ENCODE measurements at regions of chr1 and their contacts with region 1.

Region 1: GRCh38 chr1:28248283-28249012 is 10.9 kb upstream of the SESN2 start:
- DNase-seq: peak; percentile 80
- ATAC-seq: peak; percentile 53
- H3K4me3 ChIP-seq: peak overlapping the region; percentile 16; the same call in 1 of the 2 replicates
- H3K27ac ChIP-seq: peak overlapping the region; percentile 68; the same call in 1 of the 2 replicates
- H3K4me1 ChIP-seq: peaks cover 14% of the 10 kb centered on the region
- H3K27me3 ChIP-seq: no peaks in the 10 kb centered on the region; the same call in 1 of the 2 replicates
- CTCF ChIP-seq: peak; percentile 90
- POLR2A ChIP-seq: no peak
- RAD21 ChIP-seq: peak; percentile 88

Region 2: GRCh38 chr1:28259307-28260167 is 11.1 kb after region 1 on chr1 and contains the start of gene SESN2:
- CTCF ChIA-PET with region 1: interaction called, 15 read pairs
- POLR2A ChIA-PET with region 1: interaction called, 10 read pairs
- dilution Hi-C with region 1: no loop called
- in situ Hi-C with region 1: no loop called
- intact Hi-C with region 1: no loop called
- DNase-seq: peak; percentile 99
- ATAC-seq: peak; percentile 88
- H3K4me3 ChIP-seq: peak within 1 kb of the TSS; percentile 99
- H3K27ac ChIP-seq: peak within 1 kb of the TSS; percentile 92
- H3K4me1 ChIP-seq: peaks cover 15% of the 10 kb centered on the region
- H3K27me3 ChIP-seq: no peaks in the 10 kb centered on the region
- CTCF ChIP-seq: 0 out of 2 replicates have a peak, but pooled peaks have one; percentile 0
- POLR2A ChIP-seq: peak; percentile 100
- RAD21 ChIP-seq: no peak; the same call in 1 of the 2 replicates
- total RNA-seq, gene SESN2: 8.1 and 10.2 TPM in 2 replicates

Region 3: GRCh38 chr1:28290851-28291250 is 42.4 kb after region 1 on chr1:
- CTCF ChIA-PET with region 1: no interaction called
- POLR2A ChIA-PET with region 1: no interaction called
- dilution Hi-C with region 1: no loop called
- in situ Hi-C with region 1: no loop called
- intact Hi-C with region 1: no loop called
- DNase-seq: no peak
- ATAC-seq: no peak
- H3K4me3 ChIP-seq: no peak overlapping the region
- H3K27ac ChIP-seq: no peak overlapping the region
- H3K4me1 ChIP-seq: no peaks in the 10 kb centered on the region
- H3K27me3 ChIP-seq: no peaks in the 10 kb centered on the region; the same call in 1 of the 2 replicates
- CTCF ChIP-seq: no peak
- POLR2A ChIP-seq: no peak
- RAD21 ChIP-seq: no peak

Region 4: DNA sequence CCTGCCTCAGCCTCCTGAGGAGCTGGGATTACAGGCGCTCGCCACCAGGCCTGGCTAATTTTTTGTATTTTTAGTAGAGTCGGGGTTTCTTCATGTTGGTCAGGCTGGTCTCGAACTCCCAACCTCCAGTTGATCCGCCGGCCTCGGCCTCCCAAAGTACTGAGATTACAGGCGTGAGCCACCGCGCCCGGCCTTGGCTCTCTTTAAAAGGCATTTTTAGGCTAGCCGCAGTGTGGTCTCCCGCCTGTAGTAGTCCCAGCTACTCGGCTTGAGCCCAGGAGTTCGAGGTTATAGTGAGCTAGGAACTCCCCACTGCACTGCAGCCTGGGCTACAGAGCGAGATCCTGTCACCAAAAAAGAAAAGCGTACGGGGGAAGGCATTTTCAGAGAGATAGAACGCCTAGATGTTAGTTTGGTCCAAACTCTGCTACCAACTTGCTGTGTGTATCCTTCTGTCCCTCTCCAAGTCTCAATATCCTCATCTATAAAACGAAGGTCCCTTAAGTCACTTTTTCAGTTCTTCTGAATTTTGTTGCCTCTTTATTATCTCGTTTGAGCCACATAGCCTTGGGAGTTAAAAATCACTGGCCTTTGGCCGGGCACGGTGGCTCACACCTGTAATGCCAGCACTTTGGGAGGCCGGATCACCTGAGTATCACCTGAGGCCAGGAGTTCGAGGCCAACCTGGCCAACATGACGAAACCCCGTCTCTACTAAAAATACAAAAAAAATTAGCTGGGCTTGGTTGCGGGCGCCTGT is 81.1 kb after region 1 on chr1:
- CTCF ChIA-PET with region 1: interaction called, 4 read pairs
- POLR2A ChIA-PET with region 1: no interaction called
- dilution Hi-C with region 1: no loop called
- in situ Hi-C with region 1: no loop called
- intact Hi-C with region 1: loop called (anchors 2 kb)
- DNase-seq: peak; percentile 21
- ATAC-seq: peak; percentile 16
- H3K4me3 ChIP-seq: peak overlapping the region; percentile 60
- H3K27ac ChIP-seq: peak overlapping the region; percentile 72
- H3K4me1 ChIP-seq: no peaks in the 10 kb centered on the region
- H3K27me3 ChIP-seq: no peaks in the 10 kb centered on the region
- CTCF ChIP-seq: 0 out of 2 replicates have a peak, but pooled peaks have one; percentile 4
- POLR2A ChIP-seq: no peak
- RAD21 ChIP-seq: no peak

Region 5: DNA sequence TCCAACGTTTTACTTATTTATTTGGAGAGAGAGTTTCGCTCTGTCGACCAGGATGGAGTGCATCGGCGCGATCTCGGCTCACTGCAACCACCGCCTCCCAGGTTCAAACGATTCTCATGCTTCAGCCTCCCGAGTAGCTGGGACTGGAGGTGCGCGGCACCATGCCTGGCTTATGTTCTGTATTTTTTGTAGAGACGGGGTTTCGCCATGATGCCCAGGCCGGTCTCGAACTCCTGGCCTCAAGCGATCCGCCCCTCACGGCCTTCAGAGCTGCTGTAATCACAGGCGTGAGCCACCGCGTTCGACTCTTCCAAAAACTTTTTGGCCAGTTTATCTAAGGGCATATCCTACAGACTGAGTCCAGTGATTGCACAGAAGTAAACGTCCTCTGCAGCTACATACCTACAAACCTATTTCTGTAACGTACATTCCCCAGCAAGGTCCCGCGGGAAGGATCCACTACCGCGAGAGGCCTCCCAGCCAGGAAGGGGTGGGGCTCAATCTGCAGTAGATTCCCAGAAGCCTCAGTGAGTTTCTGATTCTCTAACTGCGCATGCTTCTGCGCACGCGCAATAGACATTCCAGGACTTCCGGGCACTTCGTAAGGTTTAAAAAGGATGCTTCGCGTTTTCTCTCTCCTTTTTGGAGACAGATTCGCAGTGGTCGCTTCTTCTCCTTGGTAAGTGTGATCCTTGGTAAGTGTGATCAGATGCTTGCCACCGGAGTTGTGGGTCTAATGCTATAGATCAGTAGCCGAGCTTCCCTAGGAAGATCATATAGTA is 257.1 kb after region 1 on chr1 and contains the start of gene RCC1:
- CTCF ChIA-PET with region 1: interaction called, 4 read pairs
- POLR2A ChIA-PET with region 1: interaction called, 4 read pairs
- dilution Hi-C with region 1: no loop called
- in situ Hi-C with region 1: no loop called
- intact Hi-C with region 1: loop called (anchors 1 kb)
- DNase-seq: peak; percentile 99
- ATAC-seq: peak; percentile 87
- H3K4me3 ChIP-seq: peak within 1 kb of the TSS; percentile 88
- H3K27ac ChIP-seq: peak within 1 kb of the TSS; percentile 81
- H3K4me1 ChIP-seq: peaks cover 13% of the 10 kb centered on the region
- H3K27me3 ChIP-seq: no peaks in the 10 kb centered on the region
- CTCF ChIP-seq: no peak
- POLR2A ChIP-seq: peak; percentile 100
- RAD21 ChIP-seq: no peak
- total RNA-seq, gene RCC1: 33.9 and 43.9 TPM in 2 replicates

Region 6: DNA sequence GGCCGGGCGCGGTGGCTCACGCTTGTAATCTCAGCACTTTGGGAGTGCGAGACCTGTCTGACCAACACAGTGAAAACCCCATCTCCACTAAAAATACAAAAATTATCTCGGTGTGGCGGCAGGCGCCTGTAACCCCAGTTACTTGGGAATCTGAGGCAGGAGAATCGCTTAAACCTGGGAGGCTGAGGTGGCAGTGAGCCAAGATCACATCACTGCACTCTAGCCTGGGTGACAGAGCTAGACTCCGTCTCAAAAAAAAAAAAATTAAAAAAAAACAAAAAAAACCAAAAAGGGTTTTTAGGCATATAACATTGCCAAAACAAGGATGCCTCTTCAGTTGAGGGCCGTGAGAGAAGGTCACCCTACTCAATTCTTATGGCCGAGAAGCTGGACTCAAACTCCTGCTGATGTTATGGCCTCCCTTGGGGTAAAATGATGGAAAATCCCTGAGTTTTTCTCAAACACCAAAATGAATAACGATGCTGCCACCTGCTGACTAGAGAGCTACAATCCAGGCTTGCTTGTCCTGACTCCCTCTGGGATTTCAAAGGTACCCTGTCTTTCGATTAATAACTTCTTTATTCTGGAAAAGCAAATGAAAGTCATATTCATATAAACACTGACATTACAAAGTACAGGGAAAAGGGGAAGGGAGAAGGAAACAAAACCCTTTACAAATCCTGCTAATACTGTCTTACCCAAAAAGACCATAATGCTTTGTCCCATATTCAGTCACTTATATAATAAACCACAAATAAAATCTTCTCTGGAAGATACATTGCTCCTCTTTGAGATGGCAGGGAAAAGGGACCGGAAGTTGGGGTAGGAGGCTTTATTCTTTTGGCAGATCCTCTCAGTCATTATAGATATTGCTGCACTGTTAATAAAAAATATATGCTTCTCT is 354.3 kb after region 1 on chr1:
- CTCF ChIA-PET with region 1: interaction called, 4 read pairs
- POLR2A ChIA-PET with region 1: no interaction called
- dilution Hi-C with region 1: no loop called
- in situ Hi-C with region 1: loop called (anchors 10 kb)
- intact Hi-C with region 1: loop called (anchors 1 kb)
- DNase-seq: peak; percentile 82
- ATAC-seq: peak; percentile 57
- H3K4me3 ChIP-seq: no peak overlapping the region
- H3K27ac ChIP-seq: no peak overlapping the region
- H3K4me1 ChIP-seq: peaks cover 8% of the 10 kb centered on the region
- H3K27me3 ChIP-seq: no peaks in the 10 kb centered on the region
- CTCF ChIP-seq: peak; percentile 84
- POLR2A ChIP-seq: no peak
- RAD21 ChIP-seq: peak; percentile 88